Activated CD4-positive, alpha-beta T cell treated with anti-CD3 and anti-CD28 coated beads for 36 hours (primary cell): ENCODE measurements at regions of chr19 and their contacts with region 1.

Region 1: GRCh38 chr19:23802290-23802689 is 43.6 kb upstream of the ZNF681 start:
- DNase-seq: peak; percentile 14
- ATAC-seq: peak; percentile 74
- H3K4me3 Mint-ChIP-seq: peak overlapping the region; percentile 42
- H3K27ac Mint-ChIP-seq: peak overlapping the region; percentile 82
- H3K4me1 Mint-ChIP-seq: peaks cover 29% of the 10 kb centered on the region
- H3K27me3 Mint-ChIP-seq: no peaks in the 10 kb centered on the region

Region 2: DNA sequence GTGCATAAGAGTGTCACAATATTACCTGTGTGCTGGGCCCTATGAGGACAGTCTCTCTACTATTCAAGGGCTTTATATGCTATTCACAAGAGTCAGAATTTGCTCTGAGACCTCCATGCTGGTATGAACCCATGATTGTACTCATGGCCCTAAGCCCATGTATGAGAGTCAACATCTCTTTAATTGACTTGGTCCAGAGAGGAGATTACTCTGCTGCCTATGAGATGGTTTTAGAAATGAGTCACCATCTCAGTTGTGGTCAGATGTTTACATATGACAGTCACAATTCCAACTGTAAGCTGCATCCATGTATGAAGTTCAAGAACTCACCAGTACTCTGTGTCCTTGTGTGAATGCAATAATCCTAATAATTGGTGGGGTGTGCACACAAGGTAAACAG is 1771.6 kb before region 1 on chr19:
- CTCF ChIA-PET with region 1: no interaction called
- POLR2A ChIA-PET with region 1: interaction called, 17 read pairs
- intact Hi-C with region 1: no loop called
- DNase-seq: no peak
- ATAC-seq: peak; percentile 54
- H3K4me3 Mint-ChIP-seq: no peak overlapping the region
- H3K27ac Mint-ChIP-seq: no peak overlapping the region
- H3K4me1 Mint-ChIP-seq: no peaks in the 10 kb centered on the region
- H3K27me3 Mint-ChIP-seq: peaks cover 1% of the 10 kb centered on the region

Region 3: DNA sequence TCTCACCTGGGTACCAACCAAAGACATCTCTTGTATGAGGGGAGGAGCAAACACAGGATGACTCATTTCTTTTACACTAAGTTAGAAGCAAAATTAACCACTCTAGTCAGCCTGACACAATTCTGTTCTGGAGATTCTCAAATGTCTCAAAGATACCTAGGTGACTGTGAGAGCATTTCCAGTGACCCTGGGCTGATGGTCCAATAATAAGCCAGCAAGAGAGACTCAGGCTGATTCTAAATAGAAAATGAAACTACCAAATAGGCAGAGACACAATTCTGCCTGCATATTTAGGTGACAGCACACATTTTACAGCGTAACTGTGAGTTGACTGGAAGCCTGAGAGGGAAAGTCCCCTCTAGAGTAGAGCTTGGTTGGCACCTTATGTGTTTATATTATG is 423.3 kb before region 1 on chr19:
- CTCF ChIA-PET with region 1: no interaction called
- POLR2A ChIA-PET with region 1: no interaction called
- intact Hi-C with region 1: loop called in 1 of 2 experiments (anchors 1 kb)
- DNase-seq: peak; percentile 18
- ATAC-seq: peak; percentile 97
- H3K4me3 Mint-ChIP-seq: no peak overlapping the region
- H3K27ac Mint-ChIP-seq: no peak overlapping the region
- H3K4me1 Mint-ChIP-seq: peaks cover 13% of the 10 kb centered on the region
- H3K27me3 Mint-ChIP-seq: no peaks in the 10 kb centered on the region

Region 4: GRCh38 chr19:23665651-23666410 is 136.5 kb before region 1 on chr19:
- CTCF ChIA-PET with region 1: no interaction called
- POLR2A ChIA-PET with region 1: no interaction called
- intact Hi-C with region 1: no loop called
- DNase-seq: no peak
- ATAC-seq: no peak
- H3K4me3 Mint-ChIP-seq: no peak overlapping the region
- H3K27ac Mint-ChIP-seq: no peak overlapping the region
- H3K4me1 Mint-ChIP-seq: no peaks in the 10 kb centered on the region
- H3K27me3 Mint-ChIP-seq: no peaks in the 10 kb centered on the region

Region 5: GRCh38 chr19:23774524-23774971 is 27.7 kb before region 1 on chr19:
- CTCF ChIA-PET with region 1: no interaction called
- POLR2A ChIA-PET with region 1: no interaction called
- intact Hi-C with region 1: no loop called
- DNase-seq: no peak
- ATAC-seq: no peak
- H3K4me3 Mint-ChIP-seq: no peak overlapping the region
- H3K27ac Mint-ChIP-seq: peak overlapping the region; percentile 7
- H3K4me1 Mint-ChIP-seq: peaks cover 49% of the 10 kb centered on the region
- H3K27me3 Mint-ChIP-seq: no peaks in the 10 kb centered on the region

Region 6: GRCh38 chr19:23971598-23971997 is 169.3 kb after region 1 on chr19:
- CTCF ChIA-PET with region 1: no interaction called
- POLR2A ChIA-PET with region 1: no interaction called
- intact Hi-C with region 1: no loop called
- DNase-seq: peak; percentile 11
- ATAC-seq: no peak
- H3K4me3 Mint-ChIP-seq: no peak overlapping the region
- H3K27ac Mint-ChIP-seq: no peak overlapping the region
- H3K4me1 Mint-ChIP-seq: peaks cover 4% of the 10 kb centered on the region
- H3K27me3 Mint-ChIP-seq: peaks cover 40% of the 10 kb centered on the region

Region 7: GRCh38 chr19:24048261-24048660 is 246.0 kb after region 1 on chr19:
- CTCF ChIA-PET with region 1: no interaction called
- POLR2A ChIA-PET with region 1: no interaction called
- intact Hi-C with region 1: no loop called
- DNase-seq: no peak
- ATAC-seq: no peak
- H3K4me3 Mint-ChIP-seq: no peak overlapping the region
- H3K27ac Mint-ChIP-seq: no peak overlapping the region
- H3K4me1 Mint-ChIP-seq: no peaks in the 10 kb centered on the region
- H3K27me3 Mint-ChIP-seq: no peaks in the 10 kb centered on the region